ENCODE measurements at regions of chr10 and their contacts with region 1.

Region 1: DNA sequence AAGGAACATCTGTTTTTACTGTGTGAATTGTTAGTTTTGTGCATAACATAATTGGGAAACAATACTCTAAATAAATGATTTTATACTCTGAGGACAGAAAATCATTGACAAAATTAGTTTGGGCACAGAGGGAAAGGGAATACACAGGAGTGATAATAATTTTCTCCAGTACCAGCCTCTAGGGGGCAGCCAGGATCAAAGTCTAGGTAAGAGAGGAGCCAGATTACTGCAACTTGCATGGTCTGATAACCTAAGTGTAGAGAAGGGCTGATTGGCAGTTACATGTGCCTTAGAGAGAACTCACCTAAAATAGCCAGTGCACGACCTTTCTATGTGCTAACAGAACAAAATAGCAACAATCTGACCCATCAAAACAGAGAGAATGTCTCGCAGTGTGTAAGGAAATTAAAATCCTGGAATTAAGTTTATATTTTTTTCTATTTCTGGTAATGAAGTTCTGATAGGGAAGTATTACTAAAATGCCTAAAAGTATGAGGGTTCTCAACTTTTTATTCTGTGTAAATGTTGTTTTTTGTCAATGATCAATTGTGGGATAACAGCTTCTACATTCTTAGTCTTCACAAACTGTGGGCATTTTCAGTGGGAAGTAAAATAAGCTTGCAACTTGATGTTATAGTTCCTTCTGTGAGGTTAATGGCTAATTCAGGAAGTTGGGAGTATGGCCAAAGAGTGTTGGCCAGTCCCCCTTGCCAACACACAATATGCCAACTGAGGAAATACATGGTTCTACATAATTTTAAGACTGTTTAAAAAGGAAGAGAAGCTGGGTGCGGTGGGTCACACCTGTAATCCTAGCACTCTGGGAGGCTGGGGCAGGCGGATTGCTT is 66.4 kb downstream of the EXOC6 start:
- DNase-seq: peak; percentile 14
- H3K4me3 Mint-ChIP-seq: no peak overlapping the region
- H3K27ac Mint-ChIP-seq: no peak overlapping the region
- H3K4me1 Mint-ChIP-seq: no peaks in the 10 kb centered on the region
- H3K27me3 Mint-ChIP-seq: no peaks in the 10 kb centered on the region

Region 2: GRCh38 chr10:93039721-93040120 is 125.0 kb after region 1 on chr10:
- intact Hi-C with region 1: loop called (anchors 1 kb)
- DNase-seq: no peak
- H3K4me3 Mint-ChIP-seq: no peak overlapping the region
- H3K27ac Mint-ChIP-seq: no peak overlapping the region
- H3K4me1 Mint-ChIP-seq: no peaks in the 10 kb centered on the region
- H3K27me3 Mint-ChIP-seq: no peaks in the 10 kb centered on the region

Region 3: GRCh38 chr10:93687737-93688136 is 773.0 kb after region 1 on chr10:
- intact Hi-C with region 1: no loop called
- DNase-seq: no peak
- H3K4me3 Mint-ChIP-seq: no peak overlapping the region
- H3K27ac Mint-ChIP-seq: no peak overlapping the region
- H3K4me1 Mint-ChIP-seq: no peaks in the 10 kb centered on the region
- H3K27me3 Mint-ChIP-seq: no peaks in the 10 kb centered on the region

Measured in activated T-helper 1 cell treated with anti-CD3 and anti-CD28 coated beads, Interleukin-12 subunit alpha, Interleukin-12 subunit beta, Interleukin-2, Interleukin-4 antibody, amounts not matched to agents 30 ng/mL and 10 ng/mL and 1 ng/mL, durations not matched to agents 14 hours and 24 hours and 36 hours (primary cell).